ENCODE measurements at regions of chr18 and their contacts with region 1.

Region 1: DNA sequence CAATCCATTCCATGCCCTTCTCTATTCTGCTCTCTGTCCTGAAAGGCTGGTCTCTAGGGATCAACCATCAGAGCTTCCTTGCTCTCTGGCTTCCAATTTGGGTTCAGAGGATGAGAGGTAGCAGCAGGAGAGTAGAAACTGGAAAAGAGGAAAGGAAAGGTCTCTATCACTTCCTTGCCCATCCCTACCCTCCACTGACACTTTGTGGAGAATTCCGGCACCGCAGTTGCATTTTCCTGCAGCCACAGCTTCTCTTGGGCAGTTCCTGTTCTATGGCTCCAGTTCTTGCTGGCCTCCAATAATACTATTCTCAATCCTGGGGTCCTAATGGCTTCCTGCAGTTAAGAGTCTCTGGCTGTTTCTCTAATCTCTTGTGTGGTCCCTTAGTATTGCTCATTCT is 13.3 kb upstream of the IMPACT start:
- DNase-seq: no peak
- H3K4me3 Mint-ChIP-seq: no peak overlapping the region
- H3K27ac Mint-ChIP-seq: no peak overlapping the region
- H3K4me1 Mint-ChIP-seq: peaks cover 21% of the 10 kb centered on the region
- H3K27me3 Mint-ChIP-seq: peaks cover 30% of the 10 kb centered on the region

Region 2: GRCh38 chr18:24051031-24051947 is 361.9 kb before region 1 on chr18:
- intact Hi-C with region 1: loop called (anchors 10 kb)
- DNase-seq: peak; percentile 56
- H3K4me3 Mint-ChIP-seq: peak overlapping the region; percentile 64
- H3K27ac Mint-ChIP-seq: peak overlapping the region; percentile 86
- H3K4me1 Mint-ChIP-seq: peaks cover 58% of the 10 kb centered on the region
- H3K27me3 Mint-ChIP-seq: no peaks in the 10 kb centered on the region

Region 3: DNA sequence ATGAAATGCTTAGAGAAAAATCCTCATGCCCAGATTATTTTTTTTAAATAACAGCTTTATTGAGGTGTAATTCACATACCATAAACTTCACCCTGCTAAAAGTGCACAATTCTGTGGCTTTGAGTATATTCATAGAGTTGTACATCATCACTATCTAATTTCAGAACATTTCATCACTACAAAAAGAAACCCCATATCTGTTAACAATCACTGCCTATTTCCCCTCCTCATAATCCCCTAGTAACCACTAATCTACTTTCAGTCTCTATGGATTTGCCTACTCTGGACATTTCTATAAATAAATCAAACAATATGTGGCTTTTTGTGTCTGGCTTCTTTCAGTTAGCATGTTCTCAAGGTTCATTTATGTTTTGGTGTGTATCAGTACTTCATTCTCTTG is 66.9 kb before region 1 on chr18:
- intact Hi-C with region 1: no loop called
- DNase-seq: no peak
- H3K4me3 Mint-ChIP-seq: no peak overlapping the region
- H3K27ac Mint-ChIP-seq: no peak overlapping the region
- H3K4me1 Mint-ChIP-seq: no peaks in the 10 kb centered on the region
- H3K27me3 Mint-ChIP-seq: peaks cover 2% of the 10 kb centered on the region

Region 4: GRCh38 chr18:24368749-24369148 is 44.4 kb before region 1 on chr18:
- intact Hi-C with region 1: loop called (anchors 1 kb)
- DNase-seq: peak; percentile 78
- H3K4me3 Mint-ChIP-seq: peak overlapping the region; percentile 28
- H3K27ac Mint-ChIP-seq: peak overlapping the region; percentile 75
- H3K4me1 Mint-ChIP-seq: peaks cover 39% of the 10 kb centered on the region
- H3K27me3 Mint-ChIP-seq: no peaks in the 10 kb centered on the region

Region 5: GRCh38 chr18:24397694-24398365 is 15.3 kb before region 1 on chr18 and contains the start of gene OSBPL1A:
- intact Hi-C with region 1: loop called (anchors 2 kb)
- DNase-seq: peak; percentile 89
- H3K4me3 Mint-ChIP-seq: peak within 1 kb of the TSS; percentile 77
- H3K27ac Mint-ChIP-seq: peak within 1 kb of the TSS; percentile 39
- H3K4me1 Mint-ChIP-seq: peaks cover 19% of the 10 kb centered on the region
- H3K27me3 Mint-ChIP-seq: peaks cover 27% of the 10 kb centered on the region
- total RNA-seq, gene OSBPL1A: 3.1 and 3.5 TPM in 2 replicates

Region 6: GRCh38 chr18:24456549-24456948 is 43.4 kb after region 1 on chr18:
- intact Hi-C with region 1: loop called (anchors 1 kb)
- DNase-seq: no peak
- H3K4me3 Mint-ChIP-seq: no peak overlapping the region
- H3K27ac Mint-ChIP-seq: peak overlapping the region; percentile 70
- H3K4me1 Mint-ChIP-seq: peaks cover 26% of the 10 kb centered on the region
- H3K27me3 Mint-ChIP-seq: no peaks in the 10 kb centered on the region

Region 7: GRCh38 chr18:24475926-24476589 is 62.9 kb after region 1 on chr18:
- intact Hi-C with region 1: loop called (anchors 5 kb)
- DNase-seq: no peak
- H3K4me3 Mint-ChIP-seq: no peak overlapping the region
- H3K27ac Mint-ChIP-seq: no peak overlapping the region
- H3K4me1 Mint-ChIP-seq: peaks cover 3% of the 10 kb centered on the region
- H3K27me3 Mint-ChIP-seq: peaks cover 31% of the 10 kb centered on the region

Region 8: DNA sequence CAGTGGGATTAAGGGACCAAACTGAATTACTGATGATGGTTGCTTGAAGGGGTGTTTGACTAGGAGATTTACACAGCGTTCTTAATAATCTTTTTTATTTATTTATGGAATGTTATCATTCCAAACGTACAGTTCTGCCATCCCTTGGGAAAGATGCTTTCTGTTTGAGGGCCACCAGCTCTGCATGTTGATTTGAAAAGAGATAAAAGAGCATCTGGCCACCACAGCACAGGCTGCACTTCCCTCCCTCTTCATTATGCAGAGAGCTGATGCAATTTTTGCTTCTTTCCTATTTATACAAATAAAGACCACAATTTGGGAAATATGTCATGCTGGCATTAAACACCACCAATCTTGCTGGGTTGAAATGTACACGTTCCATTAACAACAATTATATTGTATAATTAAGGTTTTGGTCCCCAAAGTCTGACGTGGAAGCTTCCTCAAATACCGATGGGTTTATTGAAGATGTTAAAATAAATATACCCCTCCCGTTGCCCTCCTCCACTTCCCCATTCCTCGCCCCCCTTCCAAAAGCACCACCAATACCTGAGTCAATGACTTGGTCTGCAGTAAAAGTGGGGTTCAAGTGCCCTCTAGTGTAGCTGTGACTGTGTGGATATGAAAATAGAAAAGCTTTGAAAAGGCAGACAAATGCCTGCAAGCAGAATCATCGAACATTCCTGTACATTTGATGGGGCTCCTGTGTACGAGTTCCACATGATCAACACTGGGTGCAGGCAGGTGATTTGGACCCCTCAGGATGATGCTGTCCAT is 259.2 kb after region 1 on chr18:
- intact Hi-C with region 1: loop called (anchors 5 kb)
- DNase-seq: no peak
- H3K4me3 Mint-ChIP-seq: no peak overlapping the region
- H3K27ac Mint-ChIP-seq: no peak overlapping the region
- H3K4me1 Mint-ChIP-seq: peaks cover 4% of the 10 kb centered on the region
- H3K27me3 Mint-ChIP-seq: peaks cover 10% of the 10 kb centered on the region

Region 9: DNA sequence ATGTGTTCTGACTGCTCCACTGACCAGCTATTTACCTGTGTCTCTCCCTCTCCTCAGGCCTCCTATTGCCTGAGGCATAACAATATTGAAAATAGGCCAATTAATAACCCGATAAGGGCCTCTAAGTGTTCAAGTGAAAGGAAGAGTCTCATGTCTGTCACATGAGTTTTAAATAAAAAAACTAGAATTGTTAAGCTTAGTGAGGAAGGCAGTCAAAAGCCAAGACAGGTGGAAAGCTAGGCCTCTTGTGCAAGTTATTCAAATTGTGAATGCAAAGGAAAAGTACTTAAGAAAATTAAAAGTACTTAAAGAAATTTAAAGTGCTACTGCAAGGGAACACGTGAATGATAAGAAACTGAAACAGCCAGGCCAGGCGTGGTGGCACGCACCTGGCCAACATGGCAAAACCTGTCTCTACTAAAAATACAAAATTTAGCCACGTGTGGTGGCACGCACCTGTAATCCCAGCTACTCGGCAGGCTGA is 1768.2 kb after region 1 on chr18:
- intact Hi-C with region 1: no loop called
- DNase-seq: no peak
- H3K4me3 Mint-ChIP-seq: no peak overlapping the region
- H3K27ac Mint-ChIP-seq: no peak overlapping the region
- H3K4me1 Mint-ChIP-seq: peaks cover 6% of the 10 kb centered on the region
- H3K27me3 Mint-ChIP-seq: no peaks in the 10 kb centered on the region

Measured in activated CD4-positive, alpha-beta T cell treated with anti-CD3 and anti-CD28 coated beads, Interleukin-2, amount 10 ng/mL, durations not matched to agents 24 days and 14 days (primary cell).